Activated T-helper 2 cell treated with anti-CD3 and anti-CD28 coated beads, Interferon-gamma antibody, Interleukin-2, Interleukin-4, amounts not matched to agents 10 μg/mL and 5 μg/mL and 100 μg/mL, durations not matched to agents 14 hours and 24 hours and 36 hours (primary cell): ENCODE measurements at regions of chr20 and their contacts with region 1.

Region 1: GRCh38 chr20:49631061-49631788 is 63.3 kb upstream of the PTGIS start:
- DNase-seq: no peak
- H3K4me3 Mint-ChIP-seq: no peak overlapping the region
- H3K27ac Mint-ChIP-seq: no peak overlapping the region
- H3K4me1 Mint-ChIP-seq: peaks cover 16% of the 10 kb centered on the region
- H3K27me3 Mint-ChIP-seq: no peaks in the 10 kb centered on the region

Region 2: DNA sequence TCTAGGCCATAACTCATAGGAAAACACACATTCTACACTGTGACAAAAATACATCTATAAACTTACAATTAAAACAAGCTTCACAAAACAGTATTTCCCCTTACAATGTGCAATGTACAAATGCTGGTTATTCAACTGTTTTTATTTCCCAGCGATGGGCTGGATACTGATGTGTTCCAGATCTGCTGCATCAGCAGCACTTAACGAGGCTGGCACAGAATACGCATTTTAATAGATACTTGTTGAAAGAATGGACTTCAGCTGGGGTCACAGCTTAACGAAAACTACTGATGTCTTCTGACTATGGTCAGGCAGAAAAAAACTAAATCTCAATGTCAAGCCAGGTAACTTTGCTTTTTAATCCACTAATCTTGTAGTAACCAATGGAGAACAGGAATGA is 11.6 kb after region 1 on chr20:
- intact Hi-C with region 1: loop called (anchors 1 kb)
- DNase-seq: no peak
- H3K4me3 Mint-ChIP-seq: no peak overlapping the region
- H3K27ac Mint-ChIP-seq: no peak overlapping the region
- H3K4me1 Mint-ChIP-seq: peaks cover 17% of the 10 kb centered on the region
- H3K27me3 Mint-ChIP-seq: no peaks in the 10 kb centered on the region

Region 3: GRCh38 chr20:49775229-49775693 is 144.0 kb after region 1 on chr20:
- intact Hi-C with region 1: no loop called
- DNase-seq: no peak
- H3K4me3 Mint-ChIP-seq: no peak overlapping the region
- H3K27ac Mint-ChIP-seq: no peak overlapping the region
- H3K4me1 Mint-ChIP-seq: peaks cover 34% of the 10 kb centered on the region
- H3K27me3 Mint-ChIP-seq: peaks cover 2% of the 10 kb centered on the region